GM13976 (cell line): ENCODE measurements at regions of chr10 and their contacts with region 1.

Region 1: DNA sequence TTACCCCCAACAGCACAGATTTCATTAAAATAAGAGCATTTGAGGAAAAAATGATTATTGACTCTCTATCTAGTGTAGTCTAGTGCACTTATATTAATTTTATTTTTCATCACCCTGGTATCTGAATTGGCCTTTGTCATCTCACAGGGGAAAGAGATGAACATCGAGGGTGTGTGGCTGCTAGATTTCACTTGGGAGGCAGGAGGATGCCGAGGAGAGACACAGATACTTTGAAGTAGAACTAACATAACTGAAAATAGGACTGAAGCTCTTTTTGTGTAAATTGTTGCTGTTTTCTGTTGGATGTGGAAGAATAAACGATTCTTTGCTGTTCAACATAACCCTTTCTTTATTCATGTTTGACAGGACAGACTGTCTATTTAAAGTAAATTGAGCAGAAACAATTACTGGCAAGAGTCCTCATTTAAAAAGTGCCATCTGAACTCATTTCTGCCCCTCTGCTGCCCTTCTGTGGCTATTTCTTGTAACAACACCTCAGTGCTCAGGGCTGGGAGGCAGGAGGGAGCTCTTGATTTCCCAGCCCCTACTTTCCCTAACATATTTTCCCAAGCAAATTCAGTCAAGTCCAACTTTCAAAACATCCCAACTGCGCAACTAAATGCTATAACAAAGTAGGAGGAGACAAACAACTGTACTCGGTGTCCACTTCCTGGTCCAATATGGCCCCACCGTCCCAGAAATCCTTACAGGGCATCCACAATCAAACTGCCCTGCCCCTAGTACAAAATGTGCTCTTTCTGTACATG is 15.6 kb downstream of the LYZL1 start:
- DNase-seq: peak; percentile 72
- CTCF ChIP-seq: peak; percentile 78

Region 2: GRCh38 chr10:28663576-28664313 is 640.7 kb before region 1 on chr10:
- in situ Hi-C with region 1: loop called (anchors 25 kb)
- DNase-seq: peak; percentile 75
- CTCF ChIP-seq: peak; percentile 95

Region 3: GRCh38 chr10:29239569-29240472 is 64.6 kb before region 1 on chr10:
- in situ Hi-C with region 1: loop called (anchors 10 kb)
- DNase-seq: peak; percentile 44
- CTCF ChIP-seq: peak; percentile 38

Region 4: GRCh38 chr10:29430101-29430500 is 125.7 kb after region 1 on chr10:
- in situ Hi-C with region 1: no loop called
- DNase-seq: no peak
- CTCF ChIP-seq: no peak

Region 5: GRCh38 chr10:29470355-29470705 is 165.9 kb after region 1 on chr10:
- in situ Hi-C with region 1: no loop called
- DNase-seq: no peak
- CTCF ChIP-seq: no peak